ENCODE measurements at regions of chr5 and their contacts with region 1.

Region 1: DNA sequence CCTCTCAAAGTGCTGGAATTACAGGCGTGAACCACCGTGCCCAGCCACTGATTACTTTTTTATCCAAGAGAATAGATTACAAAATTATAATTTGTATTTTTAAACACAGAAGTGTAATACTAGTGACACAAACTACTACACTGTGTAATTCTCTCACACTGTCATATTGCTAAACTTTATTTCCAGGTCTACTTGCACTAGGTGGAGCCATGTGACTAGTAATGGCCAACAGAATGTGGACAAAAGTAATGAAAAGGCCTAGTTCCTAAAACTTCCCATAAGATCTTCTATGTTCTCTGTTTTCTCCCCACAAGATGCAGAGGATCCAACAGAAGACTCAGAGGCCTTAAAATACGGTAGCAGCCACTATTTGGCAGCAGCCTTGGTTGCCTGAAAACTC is 27.3 kb downstream of the NADK2 start:
- DNase-seq: no peak
- H3K4me3 ChIP-seq: no peak overlapping the region
- H3K27ac ChIP-seq: no peak overlapping the region
- H3K4me1 ChIP-seq: 0 out of 2 replicates have a peak, but pooled peaks cover 4% of the 10 kb centered on the region
- H3K27me3 ChIP-seq: no peaks in the 10 kb centered on the region
- CTCF ChIP-seq: 0 out of 2 replicates have a peak, but pooled peaks have one; percentile 30

Region 2: GRCh38 chr5:35777358-35778087 is 436.9 kb before region 1 on chr5:
- CTCF ChIA-PET with region 1: interaction called, 17 read pairs
- POLR2A ChIA-PET with region 1: no interaction called
- intact Hi-C with region 1: no loop called
- DNase-seq: peak; percentile 44 to 47
- H3K4me3 ChIP-seq: no peak overlapping the region
- H3K27ac ChIP-seq: no peak overlapping the region
- H3K4me1 ChIP-seq: no peaks in the 10 kb centered on the region
- H3K27me3 ChIP-seq: no peaks in the 10 kb centered on the region
- CTCF ChIP-seq: peak; percentile 87

Region 3: GRCh38 chr5:36138900-36139683 is 75.3 kb before region 1 on chr5:
- CTCF ChIA-PET with region 1: no interaction called
- POLR2A ChIA-PET with region 1: no interaction called
- intact Hi-C with region 1: no loop called
- DNase-seq: no peak
- H3K4me3 ChIP-seq: no peak overlapping the region
- H3K27ac ChIP-seq: no peak overlapping the region
- H3K4me1 ChIP-seq: no peaks in the 10 kb centered on the region
- H3K27me3 ChIP-seq: no peaks in the 10 kb centered on the region
- CTCF ChIP-seq: no peak

Region 4: GRCh38 chr5:36507332-36507952 is 293.0 kb after region 1 on chr5:
- CTCF ChIA-PET with region 1: no interaction called
- POLR2A ChIA-PET with region 1: no interaction called
- intact Hi-C with region 1: loop called (anchors 1 kb)
- DNase-seq: peak; percentile 52 to 74
- H3K4me3 ChIP-seq: no peak overlapping the region
- H3K27ac ChIP-seq: no peak overlapping the region
- H3K4me1 ChIP-seq: peaks cover 14% of the 10 kb centered on the region
- H3K27me3 ChIP-seq: no peaks in the 10 kb centered on the region
- CTCF ChIP-seq: peak; percentile 98

Region 5: GRCh38 chr5:37005946-37006540 is 791.6 kb after region 1 on chr5:
- CTCF ChIA-PET with region 1: no interaction called
- POLR2A ChIA-PET with region 1: no interaction called
- intact Hi-C with region 1: no loop called
- DNase-seq: peak in 1 of 2 experiments; percentile 53
- H3K4me3 ChIP-seq: no peak overlapping the region
- H3K27ac ChIP-seq: no peak overlapping the region
- H3K4me1 ChIP-seq: no peaks in the 10 kb centered on the region
- H3K27me3 ChIP-seq: no peaks in the 10 kb centered on the region
- CTCF ChIP-seq: peak; percentile 77